ENCODE measurements at regions of chr3 and their contacts with region 1.

Region 1: DNA sequence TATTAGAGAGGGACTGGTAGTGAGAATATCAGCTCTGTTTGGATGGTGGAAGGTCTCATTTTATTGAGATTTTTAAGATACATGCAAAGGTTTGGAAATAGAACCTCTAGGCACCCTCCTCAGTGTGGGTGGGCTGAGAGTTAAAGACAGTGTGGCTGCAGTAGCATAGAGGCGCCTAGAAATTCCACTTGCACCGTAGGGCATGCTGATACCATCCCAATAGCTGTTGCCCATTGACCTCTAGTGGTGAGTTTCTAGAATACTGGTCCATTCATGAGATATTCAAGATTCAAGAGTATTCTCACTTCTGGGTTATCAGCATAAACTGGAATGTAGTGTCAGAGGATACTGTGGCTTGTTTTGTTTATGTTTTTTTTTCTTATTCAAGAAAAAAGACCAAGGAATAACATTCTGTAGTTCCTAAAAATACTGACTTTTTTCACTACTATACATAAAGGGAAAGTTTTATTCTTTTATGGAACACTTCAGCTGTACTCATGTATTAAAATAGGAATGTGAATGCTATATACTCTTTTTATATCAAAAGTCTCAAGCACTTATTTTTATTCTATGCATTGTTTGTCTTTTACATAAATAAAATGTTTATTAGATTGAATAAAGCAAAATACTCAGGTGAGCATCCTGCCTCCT is 87.2 kb downstream of the TGFBR2 start:
- DNase-seq: peak in 1 of 2 donors; percentile 59
- ATAC-seq: peak; percentile 76 to 88 (median 84)
- H3K4me3 ChIP-seq: no peak overlapping the region
- H3K27ac ChIP-seq: peak overlapping the region in 7 of 10 donors; percentile 8 to 64 (median 45)
- H3K4me1 ChIP-seq: peaks cover 11 to 94% (median 68%) of the 10 kb centered on the region in 9 donors
- H3K27me3 ChIP-seq: no peaks in the 10 kb centered on the region
- CTCF ChIP-seq: peak; percentile 70 to 90 (median 81)

Region 2: DNA sequence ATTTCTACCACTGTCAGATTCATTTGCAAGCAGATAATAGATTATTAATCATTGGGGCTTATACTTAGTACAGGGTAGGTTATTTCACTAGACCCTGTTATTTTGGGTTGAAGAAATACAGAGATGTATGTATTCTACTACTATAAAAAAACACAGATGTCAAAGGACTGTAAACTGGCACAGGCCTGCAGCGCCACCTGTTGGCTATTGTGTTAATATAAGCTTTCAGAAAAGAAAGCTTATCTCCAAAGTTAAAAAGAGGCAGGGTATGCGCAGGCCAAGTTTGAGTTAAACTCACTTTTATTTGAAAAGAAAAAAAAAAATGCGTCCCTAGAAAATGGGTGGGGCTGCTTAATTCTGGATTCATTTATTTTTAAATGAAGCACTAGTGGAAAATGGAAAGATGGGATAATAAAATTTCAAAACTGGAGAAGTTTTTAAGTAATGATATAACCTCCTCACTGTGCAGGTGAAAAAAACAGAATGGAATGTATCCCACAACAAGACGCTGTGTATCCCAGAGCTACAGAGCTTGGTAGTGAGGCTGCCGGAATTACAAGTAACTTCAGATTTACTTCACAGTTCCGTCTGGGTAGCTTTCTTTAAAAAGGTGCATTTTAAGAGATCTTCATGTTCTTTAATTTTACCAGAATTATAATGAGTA is 494.4 kb before region 1 on chr3:
- intact Hi-C with region 1: loop called in 9 of 10 experiments (anchors 2 to 10 kb)
- DNase-seq: peak; percentile 77 to 81
- ATAC-seq: peak in 6 of 8 donors; percentile 54 to 85 (median 77)
- H3K4me3 ChIP-seq: no peak overlapping the region
- H3K27ac ChIP-seq: peak overlapping the region in 3 of 10 donors; percentile 8 to 37 (median 19)
- H3K4me1 ChIP-seq: peaks cover 2 to 35% (median 22%) of the 10 kb centered on the region in 9 donors
- H3K27me3 ChIP-seq: no peaks in the 10 kb centered on the region
- CTCF ChIP-seq: peak; percentile 75 to 96 (median 86)

Region 3: GRCh38 chr3:30319713-30320112 is 373.9 kb before region 1 on chr3:
- intact Hi-C with region 1: loop called in 1 of 10 experiments (anchors 10 kb)
- DNase-seq: peak in 1 of 2 donors; percentile 14
- ATAC-seq: peak in 7 of 8 donors; percentile 35 to 72 (median 53)
- H3K4me3 ChIP-seq: no peak overlapping the region
- H3K27ac ChIP-seq: no peak overlapping the region
- H3K4me1 ChIP-seq: peaks cover 0 to 20% (median 3%) of the 10 kb centered on the region in 9 donors
- H3K27me3 ChIP-seq: no peaks in the 10 kb centered on the region
- CTCF ChIP-seq: peak in 8 of 9 donors; percentile 23 to 55 (median 48)

Region 4: GRCh38 chr3:30437171-30437601 is 256.4 kb before region 1 on chr3:
- intact Hi-C with region 1: loop called in 2 of 10 experiments (anchors 10 kb)
- DNase-seq: peak in 1 of 2 donors; percentile 32
- ATAC-seq: peak; percentile 53 to 81 (median 70)
- H3K4me3 ChIP-seq: no peak overlapping the region
- H3K27ac ChIP-seq: peak overlapping the region in 9 of 10 donors; percentile 12 to 70 (median 34)
- H3K4me1 ChIP-seq: peaks cover 0 to 51% (median 38%) of the 10 kb centered on the region in 9 donors
- H3K27me3 ChIP-seq: no peaks in the 10 kb centered on the region
- CTCF ChIP-seq: no peak

Region 5: GRCh38 chr3:30518181-30518864 is 175.3 kb before region 1 on chr3:
- intact Hi-C with region 1: loop called in 6 of 10 experiments (anchors 2 to 10 kb)
- DNase-seq: peak in 1 of 2 donors; percentile 56
- ATAC-seq: peak; percentile 72 to 96 (median 90)
- H3K4me3 ChIP-seq: no peak overlapping the region
- H3K27ac ChIP-seq: peak overlapping the region; percentile 19 to 81 (median 68)
- H3K4me1 ChIP-seq: peaks cover 0 to 54% (median 37%) of the 10 kb centered on the region in 9 donors
- H3K27me3 ChIP-seq: no peaks in the 10 kb centered on the region
- CTCF ChIP-seq: peak in 6 of 9 donors; percentile 9 to 48 (median 21)

Region 6: DNA sequence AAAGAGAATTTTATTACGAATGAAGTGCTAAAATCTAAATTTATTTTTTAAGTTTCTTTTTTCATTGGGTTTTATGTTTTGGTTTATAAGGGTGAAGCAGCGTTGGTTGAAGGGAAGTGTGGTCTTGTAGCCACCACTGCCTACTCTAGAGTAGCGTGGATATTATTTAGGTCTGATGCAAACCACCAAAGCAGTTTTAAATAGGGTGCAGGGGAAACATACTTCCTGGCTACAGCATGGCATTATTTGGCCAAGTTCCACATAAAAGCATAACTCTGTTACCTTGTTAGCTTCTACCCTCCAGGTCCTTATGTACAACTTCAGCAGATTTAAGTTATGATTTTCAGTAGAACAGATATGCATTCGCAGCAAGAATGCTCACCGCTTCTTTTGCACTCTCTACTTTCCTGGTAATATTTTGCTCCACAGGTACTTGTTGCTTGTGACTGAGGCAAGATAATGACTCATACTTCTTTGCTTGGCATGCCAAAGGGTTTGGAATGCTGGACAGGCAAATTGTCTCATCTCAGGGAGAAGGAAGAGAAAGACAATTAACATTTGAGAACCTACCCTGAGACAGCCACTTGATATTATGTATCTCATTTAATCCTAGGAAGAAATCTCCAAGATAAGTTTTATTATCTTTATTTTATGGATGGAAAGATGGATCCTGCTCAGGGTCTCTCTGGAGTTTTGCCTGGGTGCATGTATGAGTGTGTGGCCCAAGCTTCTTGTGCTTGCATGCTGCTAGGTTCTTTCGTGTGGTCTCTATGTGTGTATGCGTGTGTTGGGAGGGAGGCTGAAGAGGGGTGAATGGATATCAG is 81.8 kb before region 1 on chr3:
- intact Hi-C with region 1: loop called in 3 of 10 experiments (anchors 5 to 10 kb)
- DNase-seq: no peak
- ATAC-seq: no peak
- H3K4me3 ChIP-seq: peak overlapping the region in 2 of 10 donors; percentile 1 to 89
- H3K27ac ChIP-seq: peak overlapping the region in 6 of 10 donors; percentile 32 to 100 (median 99)
- H3K4me1 ChIP-seq: peaks cover 12 to 90% (median 84%) of the 10 kb centered on the region in 9 donors
- H3K27me3 ChIP-seq: no peaks in the 10 kb centered on the region
- CTCF ChIP-seq: no peak